Activated CD8-positive, alpha-beta memory T cell treated with anti-CD3 and anti-CD28 coated beads, Interleukin-2, amount 10 ng/mL, durations not matched to agents 7 days and 5 days (primary cell): ENCODE measurements at regions of chr6 and their contacts with region 1.

Region 1: DNA sequence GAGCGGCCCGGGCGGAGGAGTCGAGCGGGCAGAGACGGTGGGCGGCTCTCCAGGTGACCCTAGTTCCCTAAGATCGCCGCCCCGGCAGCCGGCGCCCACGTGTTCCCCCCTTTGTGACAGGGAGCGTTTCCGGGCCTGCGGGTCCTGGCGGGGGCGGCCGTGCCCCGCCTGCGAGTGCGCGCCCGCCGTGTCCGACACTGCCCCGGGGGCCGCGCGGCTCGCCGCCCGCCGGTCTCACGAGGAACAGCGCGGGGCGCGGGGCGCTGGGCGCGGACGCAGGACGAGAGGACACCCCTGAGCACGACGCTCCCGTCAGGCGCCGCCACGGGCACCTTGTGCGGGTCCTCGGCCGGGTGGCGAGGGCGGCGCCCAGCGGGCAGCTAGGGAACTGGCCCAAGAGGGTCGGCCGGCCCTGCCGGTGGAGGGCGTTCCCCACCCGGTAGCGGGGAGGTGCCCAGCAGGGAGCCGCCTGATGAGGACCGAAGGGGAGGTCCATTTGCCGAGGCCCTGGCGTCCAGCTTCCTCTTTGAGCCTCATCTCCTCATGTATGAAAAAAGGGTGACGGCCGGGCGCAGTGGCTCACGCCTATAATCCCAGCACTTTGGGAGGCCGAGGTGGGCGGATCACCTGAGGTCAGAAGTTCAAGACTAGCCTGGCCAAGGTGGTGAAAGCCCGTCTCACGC is at the start of gene VARS1:
- DNase-seq: peak; percentile 90
- ATAC-seq: peak; percentile 87
- H3K4me3 Mint-ChIP-seq: peak within 1 kb of the TSS; percentile 96
- H3K27ac Mint-ChIP-seq: peak within 1 kb of the TSS; percentile 98
- H3K4me1 Mint-ChIP-seq: peaks cover 48% of the 10 kb centered on the region
- H3K27me3 Mint-ChIP-seq: no peaks in the 10 kb centered on the region
- total RNA-seq, gene VARS1: 107 to 140 TPM

Region 2: GRCh38 chr6:31769684-31770371 is 25.9 kb before region 1 on chr6:
- CTCF ChIA-PET with region 1: interaction called, 39 read pairs
- DNase-seq: peak; percentile 92
- ATAC-seq: peak; percentile 91
- H3K4me3 Mint-ChIP-seq: no peak overlapping the region
- H3K27ac Mint-ChIP-seq: peak overlapping the region; percentile 16
- H3K4me1 Mint-ChIP-seq: peaks cover 31% of the 10 kb centered on the region
- H3K27me3 Mint-ChIP-seq: no peaks in the 10 kb centered on the region

Region 3: GRCh38 chr6:31776989-31777666 is 18.6 kb before region 1 on chr6 and contains the start of gene VWA7:
- CTCF ChIA-PET with region 1: interaction called, 14 read pairs
- DNase-seq: peak; percentile 89
- ATAC-seq: peak; percentile 82
- H3K4me3 Mint-ChIP-seq: peak within 1 kb of the TSS; percentile 39
- H3K27ac Mint-ChIP-seq: peak within 1 kb of the TSS; percentile 86
- H3K4me1 Mint-ChIP-seq: peaks cover 36% of the 10 kb centered on the region
- H3K27me3 Mint-ChIP-seq: no peaks in the 10 kb centered on the region
- total RNA-seq, gene VWA7: 5.7 to 6.4 TPM

Region 4: DNA sequence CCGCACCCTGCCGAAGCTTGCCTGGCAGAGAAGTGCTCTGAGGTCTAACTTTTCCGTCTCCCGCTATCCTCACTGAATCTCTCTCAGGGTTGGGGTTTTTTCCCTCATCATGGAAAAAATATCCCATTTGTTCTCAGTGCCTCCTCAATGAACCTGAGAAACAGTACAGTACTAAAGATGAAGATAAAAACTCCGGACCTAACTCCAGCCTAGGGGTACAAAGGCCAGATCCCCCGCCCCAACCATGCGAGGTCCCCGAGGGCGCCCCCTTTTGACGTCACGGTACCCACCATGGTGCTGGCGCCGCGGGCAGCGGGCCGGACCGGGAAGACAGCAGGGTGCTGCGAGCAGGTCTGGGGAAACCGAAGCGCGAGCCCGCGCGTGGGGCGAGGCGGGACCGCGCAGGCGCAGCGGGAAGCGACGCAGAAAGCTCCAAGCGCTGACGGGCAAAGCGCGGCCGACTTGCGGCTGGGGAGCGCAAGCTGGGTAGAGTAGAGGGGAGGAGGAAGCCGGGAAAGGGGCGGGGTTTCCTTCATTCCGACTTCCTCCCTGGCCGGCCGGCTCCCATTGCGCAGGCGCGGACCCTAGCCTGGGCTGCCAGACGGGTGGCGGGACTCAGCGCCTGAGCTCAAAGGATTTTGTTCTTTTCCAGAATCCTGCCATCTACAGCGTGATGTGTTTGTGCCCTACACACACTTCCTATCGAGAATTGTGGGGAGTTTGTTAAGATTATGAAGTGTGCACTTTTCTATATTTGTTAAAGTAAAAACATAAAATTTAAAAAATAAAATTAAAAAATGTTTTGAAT is 10.9 kb after region 1 on chr6 and contains the start of gene LSM2:
- CTCF ChIA-PET with region 1: interaction called, 46 read pairs
- DNase-seq: peak; percentile 98
- ATAC-seq: peak; percentile 98
- H3K4me3 Mint-ChIP-seq: peak within 1 kb of the TSS; percentile 94
- H3K27ac Mint-ChIP-seq: peak within 1 kb of the TSS; percentile 89
- H3K4me1 Mint-ChIP-seq: peaks cover 43% of the 10 kb centered on the region
- H3K27me3 Mint-ChIP-seq: no peaks in the 10 kb centered on the region
- total RNA-seq, gene LSM2: 124 to 129 TPM

Region 5: DNA sequence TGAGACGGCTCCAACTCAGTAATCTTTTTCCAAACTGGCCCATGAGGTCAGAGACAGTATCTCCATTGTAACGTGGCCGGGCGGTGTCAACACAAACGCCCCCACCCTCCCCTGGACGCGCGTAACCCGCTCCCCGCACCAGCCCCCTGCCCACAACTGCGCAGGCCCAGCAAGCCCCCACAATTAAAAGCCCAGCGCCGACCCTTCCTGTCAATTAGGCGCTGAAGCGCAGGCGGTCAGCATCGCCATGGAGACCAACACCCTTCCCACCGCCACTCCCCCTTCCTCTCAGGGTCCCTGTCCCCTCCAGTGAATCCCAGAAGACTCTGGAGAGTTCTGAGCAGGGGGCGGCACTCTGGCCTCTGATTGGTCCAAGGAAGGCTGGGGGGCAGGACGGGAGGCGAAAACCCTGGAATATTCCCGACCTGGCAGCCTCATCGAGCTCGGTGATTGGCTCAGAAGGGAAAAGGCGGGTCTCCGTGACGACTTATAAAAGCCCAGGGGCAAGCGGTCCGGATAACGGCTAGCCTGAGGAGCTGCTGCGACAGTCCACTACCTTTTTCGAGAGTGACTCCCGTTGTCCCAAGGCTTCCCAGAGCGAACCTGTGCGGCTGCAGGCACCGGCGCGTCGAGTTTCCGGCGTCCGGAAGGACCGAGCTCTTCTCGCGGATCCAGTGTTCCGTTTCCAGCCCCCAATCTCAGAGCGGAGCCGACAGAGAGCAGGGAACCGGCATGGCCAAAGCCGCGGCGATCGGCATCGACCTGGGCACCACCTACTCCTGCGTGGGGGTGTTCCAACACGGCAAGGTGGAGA is 19.5 kb after region 1 on chr6 and contains the starts of genes HSPA1A and HSPA1L:
- CTCF ChIA-PET with region 1: interaction called, 19 read pairs
- DNase-seq: peak; percentile 89
- ATAC-seq: peak; percentile 41
- H3K4me3 Mint-ChIP-seq: peak within 1 kb of the TSS; percentile 91
- H3K27ac Mint-ChIP-seq: peak within 1 kb of the TSS; percentile 95
- H3K4me1 Mint-ChIP-seq: peaks cover 56% of the 10 kb centered on the region
- H3K27me3 Mint-ChIP-seq: no peaks in the 10 kb centered on the region
- total RNA-seq, gene HSPA1A: 124 to 137 TPM
- total RNA-seq, gene HSPA1L: 2.9 to 3.1 TPM

Region 6: GRCh38 chr6:31822036-31822821 is 26.5 kb after region 1 on chr6:
- CTCF ChIA-PET with region 1: interaction called, 10 read pairs
- DNase-seq: peak; percentile 76
- ATAC-seq: peak; percentile 44
- H3K4me3 Mint-ChIP-seq: peak overlapping the region; percentile 93
- H3K27ac Mint-ChIP-seq: peak overlapping the region; percentile 94
- H3K4me1 Mint-ChIP-seq: peaks cover 73% of the 10 kb centered on the region
- H3K27me3 Mint-ChIP-seq: no peaks in the 10 kb centered on the region